Upper lobe of right lung (tissue), 1 donor: ENCODE measurements at regions of chr19 and their contacts with region 1.

Region 1: DNA sequence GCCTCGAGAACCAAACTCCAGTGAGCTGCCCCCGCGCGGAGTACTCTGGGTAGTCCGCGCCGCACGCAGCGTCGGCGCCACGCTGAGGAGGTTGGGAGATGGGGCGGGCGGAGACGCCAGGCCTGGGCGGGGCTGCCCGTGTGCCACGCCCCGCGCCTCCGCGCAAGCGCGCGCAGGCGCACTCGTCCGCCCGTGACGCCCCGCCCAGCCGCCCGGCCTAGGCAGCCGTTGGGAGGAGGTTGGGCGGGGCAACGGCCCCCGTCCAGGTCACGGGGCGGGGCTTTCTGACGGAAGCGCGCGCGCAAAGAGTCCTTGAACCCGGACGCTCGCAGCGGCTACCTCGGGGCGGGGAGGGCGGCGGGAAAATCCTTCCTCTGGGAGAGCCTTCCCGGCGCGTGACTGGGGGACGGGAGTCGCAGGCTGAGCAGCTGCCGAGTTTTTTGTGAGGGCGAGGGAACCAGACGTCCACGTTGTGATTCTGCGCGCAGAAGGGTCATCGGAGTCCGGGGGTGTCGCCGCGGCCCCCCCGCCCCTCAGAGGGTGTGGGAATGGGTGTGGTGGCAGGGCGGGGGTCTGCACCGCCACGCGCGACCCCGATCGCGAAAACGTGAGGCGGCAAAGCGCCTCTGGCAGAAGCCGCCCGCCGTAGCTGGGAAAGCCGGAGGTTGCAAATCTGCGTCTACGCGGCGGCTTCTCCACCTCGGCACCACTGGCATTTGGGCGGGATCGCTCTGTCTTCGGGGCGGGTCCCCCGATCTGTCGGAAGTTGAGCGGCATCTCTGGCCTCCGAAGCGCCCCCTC is at the start of gene MED26:
- DNase-seq: peak; percentile 98
- ATAC-seq: peak; percentile 95
- H3K4me3 ChIP-seq: peak within 1 kb of the TSS; percentile 97
- H3K27ac ChIP-seq: peak within 1 kb of the TSS; percentile 96
- H3K4me1 ChIP-seq: peaks cover 35% of the 10 kb centered on the region
- H3K27me3 ChIP-seq: no peaks in the 10 kb centered on the region
- CTCF ChIP-seq: no peak
- total RNA-seq, gene MED26: 13.4 TPM

Region 2: GRCh38 chr19:16572332-16573211 is 55.8 kb before region 1 on chr19 and contains the start of gene SLC35E1:
- intact Hi-C with region 1: loop called (anchors 10 kb)
- DNase-seq: peak; percentile 98
- ATAC-seq: peak; percentile 94
- H3K4me3 ChIP-seq: peak within 1 kb of the TSS; percentile 84
- H3K27ac ChIP-seq: peak within 1 kb of the TSS; percentile 88
- H3K4me1 ChIP-seq: peaks cover 36% of the 10 kb centered on the region
- H3K27me3 ChIP-seq: no peaks in the 10 kb centered on the region
- CTCF ChIP-seq: no peak
- total RNA-seq, gene SLC35E1: 51.2 TPM